Heart left ventricle (tissue), 16 donors: ENCODE measurements at regions of chr2 and their contacts with region 1.

Region 1: DNA sequence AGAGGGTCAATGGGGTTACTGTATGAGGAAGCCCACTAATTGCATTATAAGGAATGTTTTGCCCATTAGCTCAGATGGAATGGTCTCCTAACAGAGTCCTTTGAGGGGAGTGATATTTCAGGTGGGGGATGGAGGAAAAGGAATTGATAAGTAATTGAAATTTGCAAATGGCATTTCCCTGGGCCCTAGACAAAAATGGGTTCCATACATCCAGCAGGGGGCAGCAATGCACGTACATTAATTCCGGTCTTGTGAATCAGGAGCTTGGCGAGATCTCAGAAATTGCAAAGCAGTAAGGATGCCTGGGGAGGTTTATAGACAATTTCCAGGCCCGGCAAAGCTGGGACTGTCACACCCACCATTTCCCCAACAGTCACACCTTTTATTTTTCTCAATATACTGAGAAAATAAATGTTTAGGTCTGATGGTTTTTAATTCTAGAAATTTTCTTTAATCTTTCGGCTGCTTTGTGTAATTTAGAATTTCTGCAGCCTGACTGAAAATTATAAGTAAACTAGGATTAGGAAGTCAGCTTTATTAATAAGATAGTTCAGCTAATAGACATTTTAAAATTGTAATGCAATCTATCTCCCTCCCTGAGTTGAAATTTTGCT is 122.8 kb downstream of the LYPD1 start:
- DNase-seq: peak in 4 of 5 donors; percentile 48 to 74 (median 52)
- ATAC-seq: peak in 1 of 4 donors; percentile 51
- H3K4me3 ChIP-seq: no peak overlapping the region
- H3K27ac ChIP-seq: no peak overlapping the region
- H3K4me1 ChIP-seq: no peaks in the 10 kb centered on the region
- H3K27me3 ChIP-seq: peaks cover 0 to 8% (median 0%) of the 10 kb centered on the region in 9 donors
- CTCF ChIP-seq: peak; percentile 53 to 76 (median 64)
- POLR2A ChIP-seq: no peak

Region 2: DNA sequence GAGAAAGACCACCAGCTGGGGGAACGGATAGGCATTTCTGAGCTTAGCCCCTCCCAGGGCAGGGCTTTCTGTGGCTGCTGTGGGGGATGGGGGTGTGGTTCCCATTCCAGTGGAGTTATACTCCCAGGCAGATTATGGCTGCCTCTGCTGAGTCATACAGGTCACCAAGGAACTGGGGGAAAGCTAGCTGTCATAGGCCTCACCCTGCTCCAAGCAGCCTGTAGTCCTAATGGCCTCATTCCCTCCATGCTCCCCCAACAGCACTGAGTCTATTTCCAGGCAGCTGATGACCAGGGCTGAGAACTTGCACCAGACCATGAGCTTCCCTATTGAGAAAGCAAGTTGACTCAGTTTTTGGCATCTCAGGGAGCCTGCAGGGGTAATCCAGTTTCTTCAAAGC is 43.5 kb before region 1 on chr2:
- intact Hi-C with region 1: no loop called
- DNase-seq: no peak
- ATAC-seq: no peak
- H3K4me3 ChIP-seq: no peak overlapping the region
- H3K27ac ChIP-seq: no peak overlapping the region
- H3K4me1 ChIP-seq: no peaks in the 10 kb centered on the region
- H3K27me3 ChIP-seq: peaks cover 0 to 2% (median 0%) of the 10 kb centered on the region in 9 donors
- CTCF ChIP-seq: no peak
- POLR2A ChIP-seq: no peak

Region 3: GRCh38 chr2:132901661-132902060 is 354.5 kb after region 1 on chr2:
- intact Hi-C with region 1: no loop called
- DNase-seq: no peak
- ATAC-seq: no peak
- H3K4me3 ChIP-seq: no peak overlapping the region
- H3K27ac ChIP-seq: no peak overlapping the region
- H3K4me1 ChIP-seq: no peaks in the 10 kb centered on the region
- H3K27me3 ChIP-seq: no peaks in the 10 kb centered on the region
- CTCF ChIP-seq: no peak
- POLR2A ChIP-seq: no peak

Region 4: GRCh38 chr2:133039531-133039930 is 492.4 kb after region 1 on chr2:
- intact Hi-C with region 1: loop called in 1 of 10 experiments (anchors 10 kb)
- DNase-seq: no peak
- ATAC-seq: no peak
- H3K4me3 ChIP-seq: no peak overlapping the region
- H3K27ac ChIP-seq: no peak overlapping the region
- H3K4me1 ChIP-seq: no peaks in the 10 kb centered on the region
- H3K27me3 ChIP-seq: no peaks in the 10 kb centered on the region
- CTCF ChIP-seq: no peak
- POLR2A ChIP-seq: no peak

Region 5: DNA sequence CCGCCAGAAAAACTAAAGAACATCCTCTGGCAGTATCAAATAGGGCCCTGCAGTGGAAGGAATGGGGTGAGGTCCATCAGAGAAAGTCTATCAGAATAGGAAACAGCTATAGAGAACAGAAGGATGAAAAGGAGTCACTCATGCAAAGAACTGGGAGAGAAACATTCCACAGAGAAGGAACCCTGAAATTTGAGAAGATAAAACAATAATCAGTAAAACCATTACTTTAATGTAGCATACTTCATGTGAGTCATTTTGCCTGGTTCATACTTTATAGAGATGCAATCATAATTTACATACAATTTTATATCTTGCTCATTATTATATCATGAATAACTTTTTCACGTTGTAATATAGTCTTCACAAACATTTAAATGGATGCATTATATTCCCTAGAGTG is 618.9 kb after region 1 on chr2:
- intact Hi-C with region 1: loop called (anchors 2 to 10 kb)
- DNase-seq: no peak
- ATAC-seq: no peak
- H3K4me3 ChIP-seq: no peak overlapping the region
- H3K27ac ChIP-seq: no peak overlapping the region
- H3K4me1 ChIP-seq: no peaks in the 10 kb centered on the region
- H3K27me3 ChIP-seq: no peaks in the 10 kb centered on the region
- CTCF ChIP-seq: no peak
- POLR2A ChIP-seq: no peak

Region 6: GRCh38 chr2:133171393-133172004 is 624.3 kb after region 1 on chr2:
- intact Hi-C with region 1: loop called (anchors 2 to 10 kb)
- DNase-seq: no peak
- ATAC-seq: no peak
- H3K4me3 ChIP-seq: no peak overlapping the region
- H3K27ac ChIP-seq: no peak overlapping the region
- H3K4me1 ChIP-seq: no peaks in the 10 kb centered on the region
- H3K27me3 ChIP-seq: no peaks in the 10 kb centered on the region
- CTCF ChIP-seq: peak in 11 of 12 donors; percentile 27 to 63 (median 44)
- POLR2A ChIP-seq: no peak

Region 7: DNA sequence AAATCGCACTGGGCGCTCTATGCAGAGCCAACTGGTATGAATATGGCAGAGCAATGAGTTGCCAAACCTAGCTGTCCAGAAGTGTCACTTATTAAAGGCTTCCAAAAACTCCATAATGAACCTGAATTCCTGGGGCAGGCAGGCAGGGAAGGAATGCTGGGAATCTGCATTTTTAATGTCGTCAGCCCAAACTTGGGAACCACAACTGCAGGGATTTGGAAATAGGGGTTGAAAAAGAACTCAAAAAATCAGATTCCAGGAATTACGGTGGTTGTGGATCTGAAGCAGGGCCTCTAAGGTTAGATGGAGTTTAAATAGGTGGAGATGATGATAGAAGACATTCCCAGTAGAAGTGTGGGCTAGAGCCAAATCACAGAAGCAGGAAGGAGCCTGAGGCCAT is 1006.1 kb after region 1 on chr2:
- intact Hi-C with region 1: loop called in 1 of 10 experiments (anchors 10 kb)
- DNase-seq: no peak
- ATAC-seq: no peak
- H3K4me3 ChIP-seq: no peak overlapping the region
- H3K27ac ChIP-seq: no peak overlapping the region
- H3K4me1 ChIP-seq: peaks cover 0 to 9% (median 0%) of the 10 kb centered on the region in 12 donors
- H3K27me3 ChIP-seq: no peaks in the 10 kb centered on the region
- CTCF ChIP-seq: no peak
- POLR2A ChIP-seq: no peak

Region 8: DNA sequence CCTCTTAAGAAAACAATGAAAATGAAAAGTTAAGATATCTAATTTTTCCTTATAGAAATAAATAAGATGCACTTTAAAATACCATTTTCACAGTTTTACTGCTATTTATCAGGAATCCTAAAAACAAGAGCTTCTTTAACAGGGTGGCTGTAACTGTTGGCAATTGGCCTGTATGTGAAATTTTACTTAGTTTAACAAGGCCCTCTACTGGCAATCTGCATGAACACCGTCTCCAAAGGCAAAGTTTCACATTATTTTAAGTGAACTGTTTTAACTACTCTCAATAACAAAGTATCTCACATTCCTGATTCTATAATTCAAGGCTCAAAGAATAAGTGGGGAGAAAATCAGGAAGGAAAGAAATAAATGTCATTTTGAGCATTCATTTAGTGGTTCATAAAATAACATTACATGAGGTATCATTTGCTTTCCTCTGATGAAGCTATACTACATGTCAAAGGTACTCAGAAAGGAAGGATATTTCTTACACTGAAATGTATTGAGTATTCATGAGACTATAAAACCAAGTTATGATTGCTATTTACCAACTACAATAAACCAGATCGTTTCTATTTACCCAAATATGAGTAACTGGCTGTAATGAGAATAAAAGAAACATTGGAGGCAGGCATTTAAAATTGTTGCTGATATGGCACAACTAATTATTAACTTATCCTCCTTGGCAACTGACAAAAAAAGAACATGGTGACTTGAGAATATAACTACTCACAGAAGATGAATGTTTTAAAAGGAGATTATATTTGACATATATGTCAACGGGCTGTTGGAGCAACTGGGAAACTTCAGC is 1014.1 kb after region 1 on chr2:
- intact Hi-C with region 1: loop called in 5 of 10 experiments (anchors 2 to 10 kb)
- DNase-seq: no peak
- ATAC-seq: peak in 2 of 4 donors; percentile 58 to 62
- H3K4me3 ChIP-seq: no peak overlapping the region
- H3K27ac ChIP-seq: no peak overlapping the region
- H3K4me1 ChIP-seq: peaks cover 0 to 9% (median 2%) of the 10 kb centered on the region in 12 donors
- H3K27me3 ChIP-seq: no peaks in the 10 kb centered on the region
- CTCF ChIP-seq: peak; percentile 23 to 72 (median 62)
- POLR2A ChIP-seq: no peak